Breast epithelium (tissue), 4 donors: ENCODE measurements at regions of chr7 and their contacts with region 1.

Region 1: DNA sequence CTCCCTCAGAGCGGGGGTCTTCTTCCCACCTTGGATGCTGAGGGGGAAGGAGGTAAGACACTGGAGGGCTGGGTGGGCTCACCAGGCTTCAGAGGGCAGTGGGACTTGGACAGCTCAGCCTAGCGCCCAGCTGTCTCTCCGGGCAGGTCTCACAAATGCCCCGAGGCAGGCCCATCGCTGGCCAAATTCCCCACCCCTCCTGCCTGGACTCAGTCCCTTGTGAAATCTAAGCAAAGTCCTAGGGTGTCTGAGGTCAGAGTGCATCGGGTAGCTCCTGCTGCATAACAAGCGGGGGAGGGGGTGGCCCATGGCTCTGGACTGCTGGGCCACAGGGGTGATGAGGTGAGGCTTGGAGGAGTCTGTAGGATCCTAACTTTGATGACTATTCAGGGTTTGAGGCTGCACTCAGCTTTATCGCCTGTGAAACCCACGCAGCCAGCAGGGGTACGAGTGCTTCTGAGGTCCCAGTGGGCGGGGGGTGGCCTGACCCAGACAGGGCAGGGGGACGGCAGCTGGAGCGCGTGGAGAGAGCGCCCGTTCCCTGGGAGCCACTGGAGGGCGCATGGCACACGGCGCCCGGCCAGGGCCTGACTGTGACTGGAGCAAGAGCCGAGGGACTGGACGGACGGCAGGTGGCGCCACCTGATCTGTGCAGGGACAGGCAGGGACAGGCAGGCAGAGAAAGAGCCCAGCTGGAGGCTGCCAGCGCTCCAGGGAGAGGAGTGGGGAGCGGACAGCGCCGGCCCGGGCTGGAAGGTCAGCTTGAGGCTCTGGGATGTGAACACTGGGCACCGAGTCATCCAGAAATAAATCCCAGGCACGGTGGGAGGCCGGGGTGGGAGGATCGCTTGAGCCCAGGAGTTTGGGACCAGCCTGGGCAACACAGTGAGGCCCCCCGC is 10.0 kb downstream of the CYP2W1 start:
- DNase-seq: peak; percentile 92 to 97
- H3K4me3 ChIP-seq: no peak overlapping the region
- H3K27ac ChIP-seq: no peak overlapping the region
- H3K4me1 ChIP-seq: peaks cover 0 to 7% of the 10 kb centered on the region in 2 donors
- H3K27me3 ChIP-seq: peaks cover 3 to 36% of the 10 kb centered on the region in 2 donors
- CTCF ChIP-seq: peak; percentile 94 to 100 (median 100)
- POLR2A ChIP-seq: no peak

Region 2: GRCh38 chr7:1065263-1066260 is 72.6 kb after region 1 on chr7:
- intact Hi-C with region 1: loop called (anchors 5 kb)
- DNase-seq: peak; percentile 59 to 83
- H3K4me3 ChIP-seq: peak overlapping the region in 2 of 3 donors; percentile 15 to 35
- H3K27ac ChIP-seq: no peak overlapping the region
- H3K4me1 ChIP-seq: no peaks in the 10 kb centered on the region
- H3K27me3 ChIP-seq: no peaks in the 10 kb centered on the region
- CTCF ChIP-seq: peak; percentile 67 to 96 (median 95)
- POLR2A ChIP-seq: no peak

Region 3: GRCh38 chr7:1159891-1160668 is 167.1 kb after region 1 on chr7 and contains the start of gene ZFAND2A:
- intact Hi-C with region 1: loop called (anchors 10 kb)
- DNase-seq: peak; percentile 98
- H3K4me3 ChIP-seq: peak within 1 kb of the TSS; percentile 92 to 98 (median 95)
- H3K27ac ChIP-seq: peak within 1 kb of the TSS; percentile 94 to 97
- H3K4me1 ChIP-seq: peaks cover 0 to 16% of the 10 kb centered on the region in 2 donors
- H3K27me3 ChIP-seq: no peaks in the 10 kb centered on the region
- CTCF ChIP-seq: peak in 1 of 3 donors; percentile 8
- POLR2A ChIP-seq: peak; percentile 68
- total RNA-seq, gene ZFAND2A: 31.9 to 41.6 (median 34.1) TPM